A673 (cell line): ENCODE measurements at regions of chr17 and their contacts with region 1.

Region 1: DNA sequence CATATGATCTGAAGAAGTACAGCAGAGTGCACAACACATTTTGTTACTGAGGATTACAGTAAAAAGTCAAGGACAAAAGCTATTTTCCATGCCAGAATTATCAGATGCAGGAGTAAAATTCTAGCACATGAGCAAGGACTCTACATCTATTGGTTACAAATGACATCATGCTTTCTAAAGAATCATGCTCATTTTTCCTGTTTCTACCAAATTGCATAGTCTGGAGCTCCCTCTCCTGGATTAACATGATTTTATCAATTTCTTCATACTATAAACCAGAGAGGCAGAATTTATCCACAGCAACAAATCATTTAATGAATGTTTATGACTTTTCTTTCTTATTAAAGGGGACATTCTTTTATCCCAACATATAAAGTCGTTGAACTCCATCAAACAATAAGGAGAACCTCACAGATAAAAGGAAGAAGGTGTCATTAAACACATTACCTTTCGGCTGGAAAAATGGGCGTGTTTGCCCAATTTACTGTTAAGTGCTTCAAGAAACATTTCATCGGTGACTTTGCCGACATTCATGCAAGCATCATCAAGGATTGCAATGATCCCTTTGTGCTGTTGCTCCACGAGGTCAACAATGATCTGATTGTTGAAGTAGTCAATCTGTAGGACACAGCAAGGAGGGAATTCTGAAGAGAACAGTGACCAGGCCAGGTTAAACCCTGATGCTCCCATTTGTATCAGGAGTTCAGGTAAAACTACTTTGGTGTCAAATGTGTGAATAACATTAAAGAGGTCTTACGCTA is 121.7 kb downstream of the MYO1D start:
- DNase-seq: peak; percentile 64
- H3K4me3 ChIP-seq: no peak overlapping the region
- H3K27ac ChIP-seq: no peak overlapping the region
- H3K4me1 ChIP-seq: no peaks in the 10 kb centered on the region
- H3K27me3 ChIP-seq: no peaks in the 10 kb centered on the region
- CTCF ChIP-seq: peak; percentile 49

Region 2: DNA sequence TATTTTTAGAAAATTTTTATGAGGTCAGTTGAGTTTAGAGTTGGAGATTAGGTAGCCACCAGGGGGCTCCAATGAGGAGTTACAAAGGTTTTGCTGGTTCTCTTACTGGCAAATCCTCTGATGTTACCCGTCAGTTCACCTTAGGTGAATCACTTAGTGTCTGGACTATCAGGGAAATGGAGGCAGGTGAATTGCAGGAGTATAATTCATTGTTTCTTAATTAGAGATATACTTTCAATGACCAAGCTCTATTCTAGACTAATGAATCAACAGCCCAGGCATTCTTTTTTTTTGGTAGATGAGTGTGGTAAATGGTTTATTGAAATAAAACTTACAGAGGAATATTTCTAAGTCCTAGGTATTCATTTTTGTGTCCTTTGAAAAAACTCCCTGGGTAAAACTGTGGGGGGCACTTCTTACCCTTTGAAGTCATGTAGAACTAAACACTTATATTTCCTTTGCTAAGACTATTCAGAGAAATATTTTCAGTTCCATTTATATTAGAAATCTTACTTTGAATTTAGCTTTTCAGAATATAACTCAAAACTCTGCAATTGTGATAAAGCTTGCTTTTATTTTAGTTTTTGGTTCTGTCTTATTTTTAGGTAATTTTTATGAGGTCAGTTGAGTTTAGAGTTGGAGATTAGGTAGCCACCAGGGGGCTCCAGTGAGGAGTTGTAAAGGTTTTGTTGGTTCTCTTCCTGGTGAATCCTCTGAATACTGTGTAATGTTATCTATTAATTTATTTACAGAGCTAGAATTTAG is 293.2 kb before region 1 on chr17:
- CTCF ChIA-PET with region 1: no interaction called
- POLR2A ChIA-PET with region 1: no interaction called
- intact Hi-C with region 1: loop called (anchors 1 kb)
- DNase-seq: peak; percentile 49
- H3K4me3 ChIP-seq: no peak overlapping the region
- H3K27ac ChIP-seq: no peak overlapping the region
- H3K4me1 ChIP-seq: no peaks in the 10 kb centered on the region
- H3K27me3 ChIP-seq: no peaks in the 10 kb centered on the region
- CTCF ChIP-seq: peak; percentile 56

Region 3: DNA sequence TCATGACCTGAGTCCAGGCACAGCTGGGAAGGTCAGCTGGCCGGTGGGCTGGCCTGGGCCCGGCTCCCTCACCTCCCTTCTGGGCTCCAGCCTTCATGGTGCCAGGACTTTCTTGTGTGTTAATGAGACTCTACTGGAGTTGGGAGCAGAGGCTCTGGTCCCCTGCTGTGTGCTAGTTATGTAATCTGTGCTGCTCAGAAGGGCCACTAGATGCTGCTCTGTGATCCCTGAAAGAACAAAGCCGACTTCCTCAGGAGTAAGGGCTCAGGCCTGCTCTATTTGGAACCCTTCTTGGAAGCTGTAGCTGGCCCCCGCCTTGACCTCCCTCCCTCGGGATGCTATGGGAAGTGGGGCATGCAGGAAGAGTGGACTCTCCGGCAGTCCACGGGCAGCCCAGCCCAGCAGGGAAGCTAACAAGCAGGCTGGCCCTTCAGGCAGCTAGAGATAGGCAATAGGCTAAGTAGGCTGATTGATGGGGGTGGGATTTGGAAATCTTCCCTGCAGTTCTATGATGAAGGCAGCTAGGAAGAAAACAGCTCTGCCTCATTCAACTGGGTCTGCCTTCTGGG is 271.7 kb before region 1 on chr17:
- CTCF ChIA-PET with region 1: no interaction called
- POLR2A ChIA-PET with region 1: no interaction called
- intact Hi-C with region 1: loop called (anchors 5 kb)
- DNase-seq: peak; percentile 75
- H3K4me3 ChIP-seq: no peak overlapping the region
- H3K27ac ChIP-seq: peak overlapping the region; percentile 47
- H3K4me1 ChIP-seq: peaks cover 11% of the 10 kb centered on the region
- H3K27me3 ChIP-seq: no peaks in the 10 kb centered on the region
- CTCF ChIP-seq: peak; percentile 58

Region 4: GRCh38 chr17:32659419-32659842 is 95.8 kb before region 1 on chr17:
- CTCF ChIA-PET with region 1: no interaction called
- POLR2A ChIA-PET with region 1: no interaction called
- intact Hi-C with region 1: loop called (anchors 1 kb)
- DNase-seq: peak; percentile 52
- H3K4me3 ChIP-seq: no peak overlapping the region
- H3K27ac ChIP-seq: no peak overlapping the region
- H3K4me1 ChIP-seq: no peaks in the 10 kb centered on the region
- H3K27me3 ChIP-seq: no peaks in the 10 kb centered on the region
- CTCF ChIP-seq: peak; percentile 68